Cardiac septum (tissue), 1 donor: ENCODE measurements at regions of chr7 and their contacts with region 1.

Region 1: GRCh38 chr7:36037121-36037662 is 115.9 kb upstream of the EEPD1 start:
- DNase-seq: no peak

Region 2: GRCh38 chr7:35658602-35659201 is 378.5 kb before region 1 on chr7:
- intact Hi-C with region 1: no loop called
- DNase-seq: no peak

Region 3: GRCh38 chr7:35831208-35831607 is 206.0 kb before region 1 on chr7:
- intact Hi-C with region 1: no loop called
- DNase-seq: no peak

Region 4: DNA sequence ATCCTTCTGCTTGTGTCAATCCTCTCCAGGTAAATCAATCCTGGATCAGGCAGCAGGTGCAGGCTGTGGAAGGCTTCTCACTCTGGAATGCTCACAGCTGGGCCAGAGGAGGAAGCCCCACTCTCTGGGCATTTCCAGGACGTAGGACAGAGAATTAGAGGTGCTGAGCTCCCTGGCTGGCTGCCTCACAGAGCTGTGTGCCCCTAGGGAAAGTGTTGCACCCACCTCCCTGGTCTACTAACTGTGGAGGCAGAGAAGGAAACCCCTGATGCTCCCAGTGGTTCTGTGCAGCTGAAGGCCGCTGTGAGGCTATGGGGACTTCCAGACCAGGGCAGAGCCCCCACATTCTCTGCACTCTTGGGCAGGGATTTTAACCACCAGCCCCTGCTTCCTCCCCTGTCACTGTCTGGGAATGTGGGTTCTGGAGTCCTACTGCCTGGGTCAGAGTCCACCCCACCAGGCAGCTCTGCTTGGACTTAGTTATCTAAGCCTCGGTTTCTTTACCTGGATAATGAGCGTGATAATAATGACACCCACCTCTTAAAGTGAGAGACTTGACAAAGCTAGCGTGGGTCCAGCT is 42.3 kb after region 1 on chr7:
- intact Hi-C with region 1: loop called (anchors 5 kb)
- DNase-seq: peak; percentile 72